IMR-90 (cell line): ENCODE measurements at regions of chr5 and their contacts with region 1.

Region 1: GRCh38 chr5:81506900-81507588 is 113.1 kb upstream of the ACOT12 start:
- DNase-seq: peak; percentile 93
- ATAC-seq: peak; percentile 95
- H3K4me3 ChIP-seq: no peak overlapping the region
- H3K27ac ChIP-seq: no peak overlapping the region
- H3K4me1 ChIP-seq: no peaks in the 10 kb centered on the region
- H3K27me3 ChIP-seq: no peaks in the 10 kb centered on the region
- CTCF ChIP-seq: peak; percentile 96
- POLR2A ChIP-seq: no peak
- RAD21 ChIP-seq: peak; percentile 98

Region 2: DNA sequence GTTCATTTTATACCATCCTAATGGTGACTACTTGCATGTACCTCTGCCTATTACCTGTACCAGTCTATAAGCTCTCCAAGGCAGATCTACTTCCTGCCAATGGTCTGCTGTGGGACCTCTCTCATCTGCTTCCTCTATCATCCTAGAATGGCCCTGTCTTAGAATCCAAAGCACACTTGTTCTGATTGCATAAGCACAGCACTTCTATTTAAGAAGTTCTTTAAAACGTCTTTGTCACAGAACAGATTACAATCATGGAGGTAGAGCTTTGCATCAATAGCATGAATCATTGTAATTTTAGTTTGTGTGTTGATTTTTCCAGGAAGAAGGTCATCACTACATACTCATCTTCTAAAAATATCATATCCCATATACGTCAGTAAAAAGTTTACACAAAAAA is 18.6 kb after region 1 on chr5:
- CTCF ChIA-PET with region 1: no interaction called
- POLR2A ChIA-PET with region 1: no interaction called
- dilution Hi-C with region 1: no loop called
- in situ Hi-C with region 1: no loop called
- intact Hi-C with region 1: no loop called
- DNase-seq: peak; percentile 88
- ATAC-seq: peak; percentile 32; the same call in 1 of the 2 replicates
- H3K4me3 ChIP-seq: no peak overlapping the region
- H3K27ac ChIP-seq: no peak overlapping the region
- H3K4me1 ChIP-seq: peaks cover 2% of the 10 kb centered on the region; the same call in 1 of the 2 replicates
- H3K27me3 ChIP-seq: no peaks in the 10 kb centered on the region
- CTCF ChIP-seq: no peak
- POLR2A ChIP-seq: no peak
- RAD21 ChIP-seq: no peak

Region 3: DNA sequence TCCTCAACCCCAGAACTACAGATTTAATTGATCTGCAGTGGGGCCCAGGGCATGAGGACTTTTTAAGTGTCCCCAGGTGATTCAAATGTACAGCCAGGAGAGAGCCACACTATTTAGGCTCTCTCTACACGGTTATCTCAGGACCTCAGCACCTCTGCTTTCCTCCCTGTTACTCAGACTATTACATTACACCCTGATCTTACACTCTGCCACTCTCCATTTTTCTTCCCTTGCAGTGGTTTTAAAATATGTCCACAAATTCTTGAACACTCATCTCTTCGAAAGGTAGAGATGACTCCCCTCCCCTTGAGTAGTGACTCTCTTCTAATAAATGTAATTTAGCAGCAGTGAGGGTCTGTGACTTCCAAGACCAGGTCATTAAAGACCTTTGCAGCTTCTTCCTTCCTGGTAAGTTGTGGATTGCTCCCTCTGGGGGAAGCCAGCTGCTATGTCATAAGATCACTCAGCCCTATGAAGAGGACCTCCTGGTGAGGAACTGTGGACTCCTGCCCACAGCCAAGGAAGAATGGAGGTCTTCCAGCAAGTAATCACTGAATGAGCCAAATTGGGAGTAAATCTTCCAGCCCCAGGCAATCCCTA is 331.4 kb after region 1 on chr5:
- CTCF ChIA-PET with region 1: no interaction called
- POLR2A ChIA-PET with region 1: no interaction called
- dilution Hi-C with region 1: no loop called
- in situ Hi-C with region 1: no loop called
- intact Hi-C with region 1: loop called (anchors 5 kb)
- DNase-seq: peak; percentile 49
- ATAC-seq: peak; percentile 77
- H3K4me3 ChIP-seq: no peak overlapping the region
- H3K27ac ChIP-seq: no peak overlapping the region
- H3K4me1 ChIP-seq: no peaks in the 10 kb centered on the region
- H3K27me3 ChIP-seq: no peaks in the 10 kb centered on the region
- CTCF ChIP-seq: peak; percentile 49
- POLR2A ChIP-seq: no peak
- RAD21 ChIP-seq: peak; percentile 61

Region 4: GRCh38 chr5:81859624-81860023 is 352.6 kb after region 1 on chr5:
- CTCF ChIA-PET with region 1: interaction called, 5 read pairs
- POLR2A ChIA-PET with region 1: no interaction called
- dilution Hi-C with region 1: no loop called
- in situ Hi-C with region 1: loop called (anchors 5 kb)
- intact Hi-C with region 1: no loop called
- DNase-seq: no peak
- ATAC-seq: no peak
- H3K4me3 ChIP-seq: no peak overlapping the region
- H3K27ac ChIP-seq: no peak overlapping the region
- H3K4me1 ChIP-seq: peaks cover 3% of the 10 kb centered on the region
- H3K27me3 ChIP-seq: no peaks in the 10 kb centered on the region; the same call in 1 of the 2 replicates
- CTCF ChIP-seq: no peak
- POLR2A ChIP-seq: no peak
- RAD21 ChIP-seq: no peak

Region 5: DNA sequence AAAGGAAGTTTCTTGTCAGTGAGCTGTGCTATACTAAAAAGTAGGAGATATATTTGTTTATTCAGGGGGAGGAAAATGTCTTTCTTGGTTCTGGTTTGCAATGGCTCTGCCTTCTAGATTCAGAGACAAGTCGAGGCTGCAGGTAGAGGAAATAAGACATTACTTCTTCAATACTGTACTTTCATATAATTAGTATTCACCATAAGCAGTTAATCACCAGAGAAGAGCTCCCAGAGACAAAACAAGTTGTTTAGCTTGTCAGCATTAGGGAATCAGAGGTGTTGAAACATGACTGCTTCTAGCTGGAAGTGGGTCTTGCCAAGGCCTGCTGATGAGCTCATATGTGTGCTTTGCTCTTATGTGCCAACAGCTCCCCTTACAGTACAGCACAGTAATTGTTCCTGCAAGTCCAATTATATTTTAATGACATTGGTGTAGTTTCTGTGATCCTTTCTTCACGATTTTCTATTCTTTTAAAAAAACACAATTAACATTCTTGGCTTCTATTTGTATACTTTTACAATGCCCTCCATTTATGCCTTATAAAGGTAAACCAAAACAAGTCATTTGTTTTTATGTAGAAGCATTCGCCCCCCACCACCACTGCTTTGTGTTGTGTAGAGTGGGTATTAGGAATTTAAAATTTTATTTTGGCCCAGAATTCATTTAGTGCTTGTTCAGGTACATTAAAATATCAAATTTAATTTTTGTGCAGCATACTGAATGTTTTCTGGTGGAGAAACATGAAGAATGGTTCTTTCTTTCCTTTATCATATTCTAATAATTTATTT is 658.9 kb after region 1 on chr5:
- CTCF ChIA-PET with region 1: interaction called, 3 read pairs
- POLR2A ChIA-PET with region 1: no interaction called
- dilution Hi-C with region 1: no loop called
- in situ Hi-C with region 1: loop called (anchors 25 kb)
- intact Hi-C with region 1: loop called (anchors 2 kb)
- DNase-seq: peak; percentile 95
- ATAC-seq: peak; percentile 79
- H3K4me3 ChIP-seq: no peak overlapping the region
- H3K27ac ChIP-seq: no peak overlapping the region
- H3K4me1 ChIP-seq: peaks cover 5% of the 10 kb centered on the region
- H3K27me3 ChIP-seq: no peaks in the 10 kb centered on the region
- CTCF ChIP-seq: peak; percentile 94
- POLR2A ChIP-seq: peak; percentile 36; the same call in 1 of the 2 replicates
- RAD21 ChIP-seq: peak; percentile 94

Region 6: DNA sequence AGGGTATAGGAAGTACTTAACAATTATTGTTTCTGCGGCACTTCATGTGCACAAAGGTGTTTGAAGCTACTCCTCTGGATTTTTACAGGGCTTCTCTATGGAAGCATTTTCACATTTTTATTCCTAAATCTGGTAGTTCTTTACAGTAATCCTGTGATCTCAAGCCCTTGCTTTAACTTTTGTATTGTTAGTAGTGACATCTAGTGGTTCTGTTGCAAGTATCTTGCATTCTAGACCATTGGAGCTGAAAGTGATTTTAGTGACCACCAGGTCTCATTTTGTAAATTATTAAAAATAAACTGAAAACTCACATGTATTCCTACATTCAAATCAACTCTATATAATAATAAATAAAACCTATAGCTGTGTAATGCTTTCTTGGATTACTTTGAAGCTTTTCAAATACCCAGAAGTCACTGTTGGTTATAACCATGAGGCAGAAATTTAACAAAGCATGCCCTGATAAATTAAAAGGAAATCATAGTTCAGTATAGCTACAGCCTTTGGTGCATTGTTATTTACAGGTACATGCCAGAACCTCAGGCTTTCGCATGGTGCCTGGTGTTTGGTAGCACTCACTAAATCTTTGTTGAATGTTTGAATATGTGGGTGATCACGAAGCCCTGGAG is 752.2 kb after region 1 on chr5:
- CTCF ChIA-PET with region 1: interaction called, 3 read pairs
- POLR2A ChIA-PET with region 1: no interaction called
- dilution Hi-C with region 1: no loop called
- in situ Hi-C with region 1: no loop called
- intact Hi-C with region 1: loop called (anchors 10 kb)
- DNase-seq: peak; percentile 47
- ATAC-seq: peak; percentile 84
- H3K4me3 ChIP-seq: no peak overlapping the region
- H3K27ac ChIP-seq: no peak overlapping the region
- H3K4me1 ChIP-seq: peaks cover 1% of the 10 kb centered on the region; the same call in 1 of the 2 replicates
- H3K27me3 ChIP-seq: no peaks in the 10 kb centered on the region
- CTCF ChIP-seq: peak; percentile 57
- POLR2A ChIP-seq: no peak
- RAD21 ChIP-seq: peak; percentile 45